Left ventricle myocardium superior (tissue), 1 donor: ENCODE measurements at regions of chr9 and their contacts with region 1.

Region 1: DNA sequence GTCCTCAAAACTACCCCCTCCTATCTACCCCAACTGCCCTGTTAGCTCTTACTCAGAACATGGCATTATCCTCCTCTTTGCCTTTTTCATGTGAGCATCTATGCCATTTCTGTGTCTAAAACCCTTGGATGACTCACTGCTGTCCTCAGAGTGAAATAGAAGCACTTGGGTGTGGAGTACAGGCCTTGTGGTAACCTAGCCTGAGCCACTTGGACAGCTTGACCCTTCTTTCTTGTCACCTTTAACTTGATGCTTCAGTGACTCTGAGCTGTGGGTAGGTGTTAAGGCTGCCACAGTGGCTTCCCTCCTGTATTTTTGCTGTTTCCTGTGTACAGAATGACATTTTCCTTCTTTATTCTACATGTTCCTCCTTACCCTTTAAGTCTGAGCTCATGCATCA is 391.4 kb downstream of the SH3GL2 start:
- DNase-seq: no peak
- ATAC-seq: no peak

Region 2: GRCh38 chr9:17783227-17783626 is 187.1 kb before region 1 on chr9:
- intact Hi-C with region 1: no loop called
- DNase-seq: no peak
- ATAC-seq: no peak

Region 3: DNA sequence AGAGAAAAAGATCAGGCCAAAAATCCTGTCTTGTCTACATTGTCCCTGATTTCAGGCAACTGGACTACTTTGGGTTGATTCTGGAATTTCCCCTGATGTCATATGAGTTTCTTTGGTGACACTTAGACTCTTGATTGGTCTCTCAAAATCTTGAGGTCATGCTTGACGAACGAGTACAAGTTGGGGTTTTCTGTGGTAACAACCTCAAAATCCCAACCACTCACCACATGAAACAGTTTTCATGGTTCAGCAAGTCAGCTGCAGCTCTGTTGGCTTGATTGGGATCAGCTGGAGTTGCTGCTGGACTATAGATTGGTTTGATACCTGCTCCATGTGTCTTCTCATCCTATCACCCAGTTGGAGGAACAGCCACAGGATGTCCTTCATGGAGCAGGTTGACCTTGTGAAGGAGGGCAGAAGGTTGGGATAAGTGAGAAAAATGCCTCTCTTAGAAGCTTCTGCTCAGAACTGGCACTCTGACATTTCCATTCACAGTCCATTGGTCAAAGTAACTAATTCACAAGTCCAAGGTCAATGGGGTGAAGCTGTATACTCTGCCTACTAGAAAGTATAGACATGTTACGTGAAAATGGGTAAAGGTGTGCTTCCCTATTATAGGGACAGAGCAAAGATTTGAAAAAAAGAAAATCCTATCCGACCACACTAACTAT is 106.9 kb before region 1 on chr9:
- intact Hi-C with region 1: no loop called
- DNase-seq: no peak
- ATAC-seq: no peak

Region 4: DNA sequence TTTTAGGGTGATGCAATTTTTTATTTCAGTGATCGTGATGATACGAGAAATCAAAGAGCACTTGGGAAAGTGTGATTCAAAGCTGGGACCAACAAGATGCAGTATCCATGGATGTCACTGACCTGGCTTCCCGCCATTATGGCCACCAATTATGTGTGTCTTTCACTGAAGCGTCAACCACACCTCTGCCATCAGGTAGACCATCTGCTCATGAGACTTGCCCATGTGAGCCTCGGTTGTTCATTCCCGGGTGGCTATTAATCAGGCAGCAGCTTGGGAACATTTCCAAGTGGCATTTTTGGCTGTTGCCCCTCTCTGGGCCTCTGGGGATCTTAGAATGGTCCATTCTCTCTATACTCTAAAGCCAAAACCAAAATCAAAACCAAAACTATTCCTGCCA is 67.7 kb after region 1 on chr9:
- intact Hi-C with region 1: loop called (anchors 10 kb)
- DNase-seq: no peak
- ATAC-seq: no peak

Region 5: DNA sequence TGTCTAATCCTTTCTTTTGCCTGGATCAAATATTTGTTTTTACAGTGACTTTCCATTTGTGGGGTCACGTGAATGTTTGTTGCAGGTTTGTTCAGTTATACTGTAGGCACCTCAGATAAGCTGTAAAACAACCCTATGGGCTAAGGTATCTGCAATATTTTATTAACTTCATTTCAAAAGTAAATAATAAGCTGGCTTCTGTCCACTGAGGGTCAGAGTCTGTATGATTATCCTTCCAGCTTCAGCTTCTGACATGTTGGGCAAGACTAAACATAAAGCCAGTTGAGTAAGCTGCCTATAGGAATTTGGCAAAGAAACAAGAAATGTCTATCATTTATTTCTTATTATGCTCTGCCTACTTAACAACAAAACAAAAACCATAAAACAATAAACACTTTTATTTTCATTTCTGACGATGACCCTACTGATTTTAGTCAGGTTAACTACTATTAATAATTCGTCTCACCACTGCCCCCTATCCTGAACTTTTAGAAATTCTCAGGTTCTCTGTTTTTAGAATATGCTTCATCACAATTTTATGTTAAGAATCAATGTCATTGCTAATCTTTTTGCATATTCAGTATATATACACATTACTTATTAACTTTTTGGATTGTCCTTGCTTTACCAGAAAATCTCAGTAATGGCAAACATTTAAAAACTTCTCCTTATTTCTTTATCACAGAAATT is 90.1 kb after region 1 on chr9:
- intact Hi-C with region 1: no loop called
- DNase-seq: no peak
- ATAC-seq: no peak